ENCODE measurements at regions of chr13 and their contacts with region 1.

Region 1: GRCh38 chr13:44917589-44918325 is 71.5 kb downstream of the NUFIP1 start:
- DNase-seq: peak; percentile 95
- ATAC-seq: peak; percentile 91

Region 2: GRCh38 chr13:44620057-44620456 is 297.7 kb before region 1 on chr13:
- intact Hi-C with region 1: no loop called
- DNase-seq: no peak
- ATAC-seq: no peak

Region 3: GRCh38 chr13:44801990-44802389 is 115.8 kb before region 1 on chr13:
- intact Hi-C with region 1: loop called (anchors 10 kb)
- DNase-seq: no peak
- ATAC-seq: no peak